Sigmoid colon (tissue), 7 donors: ENCODE measurements at regions of chr7 and their contacts with region 1.

Region 1: DNA sequence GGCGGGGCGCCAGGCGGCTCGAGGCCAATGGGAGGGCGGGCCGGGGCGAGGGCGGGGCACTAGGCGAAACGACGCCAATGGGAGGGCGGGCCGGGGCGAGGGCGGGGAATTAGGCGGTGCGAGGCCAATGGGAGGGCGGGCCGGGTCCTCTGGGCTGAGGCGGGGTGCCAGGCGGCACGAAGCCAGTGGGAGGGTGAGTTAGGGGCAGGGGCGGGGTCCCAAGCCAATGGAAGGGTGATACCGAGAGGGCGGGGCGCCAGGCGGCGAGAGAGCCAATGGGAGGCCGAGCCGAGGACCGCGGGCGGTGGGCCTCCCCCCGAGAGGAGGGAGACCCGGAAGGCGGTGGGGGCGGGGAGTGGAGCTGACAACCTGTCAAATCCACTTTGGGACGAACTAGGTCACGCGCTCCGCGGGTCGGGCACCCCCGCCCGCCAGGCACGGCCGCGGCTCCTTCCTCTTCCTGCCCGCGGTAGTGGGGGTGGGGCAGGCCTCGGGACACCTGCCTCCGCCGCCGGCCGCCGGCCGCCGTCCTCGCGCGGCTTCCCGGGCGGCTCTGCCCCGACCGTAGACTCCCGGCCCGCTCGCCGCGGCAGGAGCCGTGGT is 28.0 kb upstream of the KMT2C start:
- DNase-seq: peak; percentile 100
- H3K4me3 ChIP-seq: peak overlapping the region; percentile 84 to 96 (median 90)
- H3K27ac ChIP-seq: peak overlapping the region; percentile 99 to 100 (median 100)
- H3K4me1 ChIP-seq: peaks cover 0 to 33% (median 16%) of the 10 kb centered on the region in 4 donors
- H3K27me3 ChIP-seq: no peaks in the 10 kb centered on the region
- CTCF ChIP-seq: no peak
- EP300 ChIP-seq: peak in 2 of 4 donors; percentile 80 to 84
- POLR2A ChIP-seq: no peak

Region 2: GRCh38 chr7:152336754-152337368 is 126.9 kb before region 1 on chr7:
- intact Hi-C with region 1: loop called (anchors 10 kb)
- DNase-seq: no peak
- H3K4me3 ChIP-seq: no peak overlapping the region
- H3K27ac ChIP-seq: no peak overlapping the region
- H3K4me1 ChIP-seq: peaks cover 0 to 74% (median 45%) of the 10 kb centered on the region in 4 donors
- H3K27me3 ChIP-seq: no peaks in the 10 kb centered on the region
- CTCF ChIP-seq: peak in 3 of 4 experiments; percentile 19 to 45 (median 34)
- EP300 ChIP-seq: no peak
- POLR2A ChIP-seq: no peak

Region 3: DNA sequence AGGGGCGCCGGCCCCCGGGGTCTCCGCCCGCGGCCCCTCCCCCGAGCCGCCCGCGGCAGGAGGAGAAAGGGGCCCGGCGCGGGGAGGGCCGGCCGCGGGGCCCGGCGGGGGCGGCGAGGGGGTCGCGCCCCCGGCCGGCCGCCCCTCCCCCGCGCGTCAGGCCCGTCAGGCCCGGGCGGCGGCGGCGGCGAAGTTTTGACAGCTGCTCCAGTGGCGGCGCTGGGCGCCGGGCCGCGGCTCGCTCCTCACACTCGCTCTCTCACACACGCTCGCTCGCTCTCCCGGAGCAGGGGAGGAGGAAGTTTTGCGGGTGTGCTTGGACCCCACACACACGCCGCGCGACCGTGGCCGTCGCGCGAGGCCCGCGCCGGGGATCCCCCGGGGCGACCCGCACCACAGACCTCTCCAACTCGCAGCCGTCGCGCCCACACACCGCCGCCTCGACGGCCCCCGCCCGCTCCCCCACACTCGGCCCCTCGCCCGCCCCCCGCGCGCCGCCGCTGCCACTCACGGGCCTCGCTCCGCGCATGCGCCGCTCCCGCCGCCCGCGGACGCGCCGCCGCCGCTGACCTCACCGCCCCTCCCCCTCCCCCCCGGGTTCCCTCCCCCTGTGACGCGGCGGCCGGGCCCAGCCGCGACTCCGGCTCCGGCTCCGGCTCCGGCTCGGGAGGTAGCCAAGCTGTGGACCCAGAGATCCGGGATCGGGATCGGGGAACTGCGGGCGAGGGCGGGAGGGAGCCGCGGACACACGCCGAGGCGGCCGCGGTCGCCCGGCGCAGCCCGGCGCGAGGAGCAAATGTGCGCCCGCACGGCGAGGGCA is 27.5 kb before region 1 on chr7:
- intact Hi-C with region 1: loop called (anchors 1 kb)
- DNase-seq: peak; percentile 98
- H3K4me3 ChIP-seq: peak overlapping the region; percentile 62 to 100 (median 79)
- H3K27ac ChIP-seq: peak overlapping the region; percentile 95 to 100 (median 98)
- H3K4me1 ChIP-seq: peaks cover 3 to 33% (median 24%) of the 10 kb centered on the region in 4 donors
- H3K27me3 ChIP-seq: no peaks in the 10 kb centered on the region
- CTCF ChIP-seq: no peak
- EP300 ChIP-seq: no peak
- POLR2A ChIP-seq: no peak

Region 4: DNA sequence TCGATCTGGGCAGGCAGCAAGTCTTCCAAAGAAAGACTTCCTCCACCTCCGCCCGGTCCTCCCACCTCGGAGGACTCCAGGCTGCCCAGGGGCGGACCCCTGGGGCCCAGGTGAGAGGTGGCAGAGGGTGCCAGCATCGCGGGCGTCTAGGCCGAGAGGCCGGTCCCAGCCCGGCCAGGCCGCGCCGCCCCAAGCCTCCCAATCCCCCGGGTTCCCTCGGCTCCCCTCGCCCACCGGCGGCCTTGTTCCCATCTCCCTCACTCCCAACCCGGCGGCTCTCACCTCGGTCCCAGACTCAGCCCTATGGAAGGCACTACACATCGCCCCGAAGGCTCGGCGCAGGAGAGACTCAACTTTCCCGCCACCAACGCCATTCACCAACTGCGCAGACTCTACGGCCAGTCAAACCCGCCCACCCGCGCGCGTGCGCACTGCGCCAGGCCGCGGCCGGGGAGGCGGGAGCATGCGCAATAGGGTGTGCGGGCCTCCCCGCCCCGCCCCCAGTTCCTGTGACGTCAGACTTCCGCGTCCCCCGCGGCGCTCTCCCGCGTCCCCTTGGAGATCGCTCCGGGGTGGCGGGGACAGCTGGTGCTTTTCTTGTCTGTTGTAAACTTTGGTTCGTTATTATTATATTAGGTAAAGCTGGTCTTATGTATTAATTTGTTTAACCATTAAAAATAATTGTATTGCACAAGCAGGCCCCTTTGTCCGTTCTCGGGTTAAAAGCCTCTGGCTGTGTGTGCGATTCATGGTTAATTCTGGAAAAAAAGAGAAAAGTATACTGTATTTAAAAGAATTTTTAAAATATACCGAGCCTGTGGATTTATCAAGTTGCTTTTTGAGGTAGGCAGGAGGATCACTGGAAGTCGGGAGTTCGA is 212.2 kb after region 1 on chr7 and contains the start of gene XRCC2:
- intact Hi-C with region 1: loop called (anchors 1 kb)
- DNase-seq: peak; percentile 94
- H3K4me3 ChIP-seq: peak within 1 kb of the TSS; percentile 47 to 79 (median 60)
- H3K27ac ChIP-seq: peak within 1 kb of the TSS; percentile 76 to 87 (median 82)
- H3K4me1 ChIP-seq: peaks cover 0 to 12% (median 10%) of the 10 kb centered on the region in 4 donors
- H3K27me3 ChIP-seq: no peaks in the 10 kb centered on the region
- CTCF ChIP-seq: no peak
- EP300 ChIP-seq: peak in 1 of 4 donors; percentile 33
- POLR2A ChIP-seq: peak; percentile 57 to 63
- total RNA-seq, gene XRCC2: 0.27 to 0.55 (median 0.34) TPM

Region 5: DNA sequence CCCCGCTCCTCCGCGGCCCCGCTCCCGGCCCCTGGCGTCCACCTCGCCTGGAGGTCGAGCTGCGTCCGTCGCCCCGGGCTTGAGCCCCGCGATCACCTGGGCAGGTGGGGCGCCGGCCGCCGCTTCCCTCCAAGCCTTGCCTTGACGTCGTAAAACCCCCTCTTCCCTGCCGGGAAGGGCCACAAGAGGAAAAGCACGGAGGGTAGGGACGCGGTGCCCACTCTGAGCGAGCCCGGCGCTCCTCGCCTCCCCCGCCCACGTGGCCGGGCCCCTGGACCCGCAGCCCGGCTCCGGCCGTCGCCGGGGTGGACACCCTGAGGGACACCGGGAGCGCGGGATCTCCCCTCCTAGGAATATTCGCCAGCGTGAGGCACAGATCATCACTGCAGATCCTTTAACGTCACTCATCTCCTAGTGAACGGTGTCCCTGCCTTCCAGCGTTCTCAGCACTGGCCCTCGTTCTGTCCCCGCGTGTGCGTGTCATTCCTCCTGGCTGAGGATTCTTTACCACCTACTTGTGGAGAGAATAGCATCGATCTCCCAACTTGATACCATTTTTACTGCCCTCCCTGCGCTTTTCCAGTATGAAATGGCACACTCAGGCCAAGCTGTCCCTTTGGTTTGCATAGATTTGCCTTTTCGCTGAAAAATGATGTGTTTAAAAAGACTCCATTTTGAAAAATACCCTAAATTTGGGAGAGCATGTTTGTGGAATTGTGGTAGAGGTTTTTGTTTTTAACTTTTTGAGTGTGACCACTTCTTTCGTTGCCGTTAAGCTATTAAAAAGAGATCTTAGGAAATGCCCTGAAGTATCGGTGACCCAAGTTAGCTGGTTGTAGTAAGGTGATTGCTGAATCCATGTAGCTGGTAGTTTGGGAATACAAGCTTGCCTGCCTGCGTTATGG is 296.4 kb after region 1 on chr7:
- intact Hi-C with region 1: loop called (anchors 10 kb)
- DNase-seq: peak; percentile 66
- H3K4me3 ChIP-seq: peak overlapping the region; percentile 90 to 98 (median 94)
- H3K27ac ChIP-seq: peak overlapping the region; percentile 88 to 96 (median 94)
- H3K4me1 ChIP-seq: peaks cover 0 to 16% (median 13%) of the 10 kb centered on the region in 4 donors
- H3K27me3 ChIP-seq: no peaks in the 10 kb centered on the region
- CTCF ChIP-seq: no peak
- EP300 ChIP-seq: no peak
- POLR2A ChIP-seq: no peak